ENCODE measurements at regions of chr14 and their contacts with region 1.

Region 1: DNA sequence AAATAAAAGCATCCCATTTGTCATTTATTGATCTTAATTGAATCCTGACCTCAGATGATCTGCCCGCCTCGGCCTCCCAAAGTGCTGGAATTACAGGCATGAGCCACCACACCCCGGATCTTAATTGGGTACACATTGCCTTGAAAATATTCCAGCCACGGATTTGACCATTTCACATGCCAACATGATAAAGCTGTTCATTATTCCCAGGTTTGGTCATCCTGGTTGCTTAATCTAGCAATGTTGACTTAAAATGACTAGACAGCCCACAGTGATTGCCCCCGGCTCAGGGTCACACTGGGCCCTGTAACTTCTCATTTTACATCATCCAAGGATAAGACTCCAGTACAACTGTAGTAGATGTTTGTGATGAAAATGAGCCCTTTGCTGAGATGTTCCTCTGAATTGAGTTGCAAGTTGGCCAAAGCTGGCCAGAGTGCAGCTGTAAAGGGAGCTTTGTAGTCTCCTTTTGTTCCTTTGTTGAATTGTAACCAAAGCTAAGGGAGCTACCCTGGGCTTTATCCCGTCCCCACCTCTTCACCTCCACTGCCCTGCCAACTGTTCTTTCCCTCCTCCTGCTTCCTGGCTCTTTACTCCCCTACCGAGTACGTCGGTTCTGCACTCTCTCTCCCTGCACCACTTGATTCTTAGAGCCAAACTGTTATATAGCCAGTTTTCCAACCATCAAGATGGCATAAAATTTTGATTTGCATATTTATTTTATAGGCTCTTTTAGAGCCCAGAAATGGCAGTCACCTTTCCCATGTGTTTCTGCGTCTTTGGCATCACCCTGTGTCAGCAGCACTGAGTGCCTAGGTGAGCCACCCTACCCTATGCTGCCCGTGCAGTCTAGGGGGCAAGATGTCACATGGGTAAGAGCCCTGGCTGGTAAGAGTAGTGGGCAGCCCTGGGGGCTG is 141.3 kb upstream of the HIF1A start:
- DNase-seq: no peak
- H3K4me3 ChIP-seq: no peak overlapping the region
- H3K27ac ChIP-seq: peak overlapping the region in 1 of 2 experiments; percentile 62
- H3K4me1 ChIP-seq: peaks cover 11 to 29% (median 20%) of the 10 kb centered on the region in 4 experiments
- H3K27me3 ChIP-seq: no peaks in the 10 kb centered on the region

Region 2: DNA sequence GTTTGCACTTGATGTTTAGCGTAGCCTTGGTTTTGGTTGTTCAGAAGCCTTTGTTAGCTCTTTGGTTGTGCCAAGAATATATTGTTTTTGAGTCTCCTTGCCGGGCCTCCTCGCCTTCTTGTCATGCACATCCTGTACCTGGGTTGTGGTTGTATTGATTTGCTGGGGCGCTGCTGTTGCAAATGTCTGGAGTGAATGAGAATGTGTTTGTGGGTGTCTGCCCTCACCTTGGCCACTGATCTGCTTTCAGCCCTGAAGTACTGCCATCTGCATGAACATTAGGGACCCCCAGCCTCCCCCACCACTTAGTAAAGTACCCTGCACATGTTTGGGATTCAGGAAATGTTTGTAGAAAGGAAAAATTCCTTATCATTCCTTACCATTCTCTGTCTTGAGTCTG is 216.1 kb before region 1 on chr14:
- CTCF ChIA-PET with region 1: no interaction called
- POLR2A ChIA-PET with region 1: no interaction called
- DNase-seq: peak in 2 of 3 donors; percentile 24 to 47
- H3K4me3 ChIP-seq: no peak overlapping the region
- H3K27ac ChIP-seq: no peak overlapping the region
- H3K4me1 ChIP-seq: peaks cover 10 to 53% (median 23%) of the 10 kb centered on the region in 4 experiments
- H3K27me3 ChIP-seq: no peaks in the 10 kb centered on the region

Region 3: DNA sequence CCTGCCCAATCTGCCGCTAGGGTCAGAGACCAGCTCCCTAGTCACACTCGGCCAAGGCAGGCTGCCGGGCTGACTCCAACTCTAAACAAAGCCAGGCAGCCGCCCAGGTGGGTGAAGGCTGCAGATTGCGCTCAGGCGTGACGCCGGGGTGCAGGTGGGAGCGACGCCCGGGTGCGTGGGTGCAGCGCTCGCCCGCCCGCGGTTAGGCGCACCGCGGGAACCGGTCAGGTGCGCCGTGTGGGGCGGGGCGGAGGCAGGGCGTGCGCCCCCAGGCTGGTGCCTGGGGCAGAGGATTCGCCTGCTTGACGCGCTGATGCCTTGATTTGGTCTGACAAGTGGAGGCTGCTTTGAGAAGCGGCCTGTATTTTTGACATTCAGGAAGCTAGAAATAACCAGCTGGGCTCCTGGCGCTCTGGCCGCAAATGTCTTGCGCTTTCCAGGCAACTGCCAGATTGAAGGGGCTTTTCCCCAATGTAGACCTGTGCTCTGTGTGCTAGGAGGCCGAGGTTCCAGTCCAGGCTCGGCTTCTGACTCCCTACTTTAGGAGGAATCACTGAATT is 14.7 kb after region 1 on chr14:
- CTCF ChIA-PET with region 1: interaction called, 10 read pairs
- POLR2A ChIA-PET with region 1: no interaction called
- DNase-seq: peak in 2 of 3 donors; percentile 73 to 78
- H3K4me3 ChIP-seq: peak overlapping the region in 6 of 7 experiments; percentile 23 to 68 (median 56)
- H3K27ac ChIP-seq: no peak overlapping the region
- H3K4me1 ChIP-seq: peaks cover 22 to 43% (median 42%) of the 10 kb centered on the region in 4 experiments
- H3K27me3 ChIP-seq: peaks cover 0 to 4% (median 0%) of the 10 kb centered on the region in 5 experiments

Region 4: DNA sequence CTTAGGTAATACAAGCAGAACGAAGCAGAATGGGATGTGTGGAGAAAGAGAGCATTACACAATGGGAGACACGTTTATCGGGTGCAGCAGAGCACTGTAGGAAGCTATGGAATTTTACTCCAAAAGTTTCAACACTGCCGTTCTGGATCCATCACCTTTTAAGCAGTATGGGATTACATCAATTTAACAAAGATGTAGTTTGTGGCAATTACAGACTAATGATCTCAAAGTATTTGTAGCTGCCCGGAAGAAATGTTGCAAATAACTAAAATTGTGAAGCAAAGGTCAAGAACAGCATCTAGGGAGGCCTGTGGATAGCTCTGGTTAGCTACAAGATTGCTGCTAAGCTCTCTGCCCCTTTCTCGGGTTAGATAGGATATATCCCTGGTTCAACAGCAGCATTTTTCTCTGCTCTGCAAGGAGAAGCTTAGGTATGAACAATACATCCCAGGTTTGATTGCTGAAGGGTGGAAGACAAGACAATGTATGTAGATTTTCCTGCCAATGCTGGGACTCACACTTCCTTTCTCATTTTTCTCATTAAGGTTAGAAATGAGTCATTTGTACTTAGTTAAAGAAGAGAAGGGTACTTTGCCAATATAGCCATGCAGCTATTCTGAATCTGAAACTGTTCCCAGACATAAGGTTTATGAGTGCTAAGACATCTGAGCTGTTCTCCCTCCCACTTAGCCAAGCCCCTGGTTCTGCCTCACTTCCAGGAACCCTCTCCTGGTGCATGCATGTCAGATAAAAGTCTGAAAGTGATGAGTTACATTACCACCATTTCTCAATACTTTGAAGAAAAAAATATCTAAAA is 66.4 kb after region 1 on chr14:
- CTCF ChIA-PET with region 1: no interaction called
- POLR2A ChIA-PET with region 1: no interaction called
- DNase-seq: no peak
- H3K4me3 ChIP-seq: no peak overlapping the region
- H3K27ac ChIP-seq: no peak overlapping the region
- H3K4me1 ChIP-seq: no peaks in the 10 kb centered on the region
- H3K27me3 ChIP-seq: no peaks in the 10 kb centered on the region

Measured in common myeloid progenitor, CD34-positive (primary cell).